ENCODE measurements at regions of chrX and their contacts with region 1.

Region 1: GRCh38 chrX:72306851-72307645 is 1.3 kb upstream of the CITED1 start:
- DNase-seq: peak; percentile 70
- H3K4me3 ChIP-seq: peak overlapping the region; percentile 47 to 59 (median 56)
- H3K27ac ChIP-seq: no peak overlapping the region
- H3K4me1 ChIP-seq: peaks cover 23% of the 10 kb centered on the region
- H3K27me3 ChIP-seq: peaks cover 52% of the 10 kb centered on the region
- CTCF ChIP-seq: no peak

Region 2: GRCh38 chrX:72276478-72276953 is 30.5 kb before region 1 on chrX:
- CTCF ChIA-PET with region 1: no interaction called
- dilution Hi-C with region 1: no loop called
- in situ Hi-C with region 1: no loop called
- intact Hi-C with region 1: loop called (anchors 2 kb)
- DNase-seq: no peak
- H3K4me3 ChIP-seq: peak overlapping the region; percentile 76 to 97 (median 93)
- H3K27ac ChIP-seq: peak overlapping the region; percentile 79
- H3K4me1 ChIP-seq: peaks cover 52% of the 10 kb centered on the region
- H3K27me3 ChIP-seq: no peaks in the 10 kb centered on the region
- CTCF ChIP-seq: no peak